Activated CD4-positive, alpha-beta T cell treated with anti-CD3 and anti-CD28 coated beads for 36 hours (primary cell): ENCODE measurements at regions of chr14 and their contacts with region 1.

Region 1: GRCh38 chr14:58297762-58298476 is 436 bp upstream of the ARID4A start:
- DNase-seq: peak; percentile 99
- ATAC-seq: peak; percentile 89
- H3K4me3 Mint-ChIP-seq: no peak overlapping the region
- H3K27ac Mint-ChIP-seq: no peak overlapping the region
- H3K4me1 Mint-ChIP-seq: peaks cover 38% of the 10 kb centered on the region
- H3K27me3 Mint-ChIP-seq: no peaks in the 10 kb centered on the region

Region 2: GRCh38 chr14:57390028-57390805 is 907.7 kb before region 1 on chr14 and contains the start of gene NAA30:
- CTCF ChIA-PET with region 1: no interaction called
- POLR2A ChIA-PET with region 1: no interaction called
- intact Hi-C with region 1: loop called in 1 of 2 experiments (anchors 2 kb)
- DNase-seq: peak; percentile 96
- ATAC-seq: peak; percentile 91
- H3K4me3 Mint-ChIP-seq: peak within 1 kb of the TSS; percentile 81
- H3K27ac Mint-ChIP-seq: peak within 1 kb of the TSS; percentile 93
- H3K4me1 Mint-ChIP-seq: peaks cover 37% of the 10 kb centered on the region
- H3K27me3 Mint-ChIP-seq: no peaks in the 10 kb centered on the region
- total RNA-seq, gene NAA30: 14.2 to 17.6 TPM

Region 3: DNA sequence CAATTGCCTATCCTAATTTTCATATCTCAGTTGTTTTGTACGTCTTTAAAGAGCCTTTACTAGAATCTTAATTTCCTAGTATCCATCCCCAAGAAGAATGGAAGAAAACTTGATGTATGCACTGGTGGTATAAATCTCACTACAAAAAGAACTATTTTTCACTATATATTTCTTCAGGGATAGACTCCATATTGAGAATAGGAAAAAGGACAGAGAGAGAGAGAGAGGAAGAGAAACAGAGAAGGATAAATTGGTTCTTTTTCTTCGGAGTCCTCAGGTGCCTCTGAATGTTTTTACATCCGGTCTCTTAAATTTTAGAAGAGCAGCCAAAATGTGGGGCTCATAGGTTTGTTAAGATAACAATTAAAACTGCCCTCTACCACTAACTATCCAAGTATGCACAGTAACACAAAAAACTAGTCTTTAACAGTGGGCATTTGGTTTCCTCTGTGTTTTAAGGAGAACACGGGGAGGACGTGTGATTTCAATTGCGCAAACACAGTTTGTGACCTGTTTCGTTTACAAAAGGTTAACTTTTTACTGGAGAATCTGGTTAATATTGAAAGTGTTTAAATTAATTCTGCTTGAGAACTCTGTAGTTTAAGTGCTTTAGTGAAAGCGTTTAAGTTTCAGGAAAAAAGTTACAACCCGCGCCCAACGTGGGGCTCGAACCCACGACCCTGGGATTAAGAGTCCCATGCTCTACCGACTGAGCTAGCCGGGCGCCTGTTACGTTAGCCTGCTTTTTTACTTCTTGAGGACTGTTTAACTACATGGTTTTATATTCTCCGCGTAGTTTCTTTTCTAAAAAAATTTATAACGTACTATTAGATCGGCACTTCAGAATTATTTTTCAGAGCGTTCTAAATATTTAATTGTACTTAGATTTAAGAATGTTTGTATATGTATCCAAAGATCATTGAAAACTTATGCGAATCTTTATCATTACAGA is 58.4 kb before region 1 on chr14:
- CTCF ChIA-PET with region 1: interaction called, 11 read pairs
- POLR2A ChIA-PET with region 1: interaction called, 15 read pairs
- intact Hi-C with region 1: loop called (anchors 1 kb)
- DNase-seq: peak; percentile 87
- ATAC-seq: peak; percentile 6
- H3K4me3 Mint-ChIP-seq: no peak overlapping the region
- H3K27ac Mint-ChIP-seq: no peak overlapping the region
- H3K4me1 Mint-ChIP-seq: peaks cover 21% of the 10 kb centered on the region
- H3K27me3 Mint-ChIP-seq: no peaks in the 10 kb centered on the region

Region 4: GRCh38 chr14:58272588-58273372 is 25.1 kb before region 1 on chr14:
- CTCF ChIA-PET with region 1: interaction called, 4 read pairs
- POLR2A ChIA-PET with region 1: interaction called, 11 read pairs
- intact Hi-C with region 1: no loop called
- DNase-seq: no peak
- ATAC-seq: no peak
- H3K4me3 Mint-ChIP-seq: no peak overlapping the region
- H3K27ac Mint-ChIP-seq: peak overlapping the region; percentile 13
- H3K4me1 Mint-ChIP-seq: peaks cover 50% of the 10 kb centered on the region
- H3K27me3 Mint-ChIP-seq: no peaks in the 10 kb centered on the region

Region 5: GRCh38 chr14:58331111-58331510 is 33.2 kb after region 1 on chr14:
- CTCF ChIA-PET with region 1: interaction called, 3 read pairs
- POLR2A ChIA-PET with region 1: interaction called, 3 read pairs
- intact Hi-C with region 1: loop called (anchors 1 kb)
- DNase-seq: peak; percentile 91
- ATAC-seq: peak; percentile 98
- H3K4me3 Mint-ChIP-seq: peak overlapping the region; percentile 71
- H3K27ac Mint-ChIP-seq: peak overlapping the region; percentile 87
- H3K4me1 Mint-ChIP-seq: peaks cover 16% of the 10 kb centered on the region
- H3K27me3 Mint-ChIP-seq: no peaks in the 10 kb centered on the region

Region 6: DNA sequence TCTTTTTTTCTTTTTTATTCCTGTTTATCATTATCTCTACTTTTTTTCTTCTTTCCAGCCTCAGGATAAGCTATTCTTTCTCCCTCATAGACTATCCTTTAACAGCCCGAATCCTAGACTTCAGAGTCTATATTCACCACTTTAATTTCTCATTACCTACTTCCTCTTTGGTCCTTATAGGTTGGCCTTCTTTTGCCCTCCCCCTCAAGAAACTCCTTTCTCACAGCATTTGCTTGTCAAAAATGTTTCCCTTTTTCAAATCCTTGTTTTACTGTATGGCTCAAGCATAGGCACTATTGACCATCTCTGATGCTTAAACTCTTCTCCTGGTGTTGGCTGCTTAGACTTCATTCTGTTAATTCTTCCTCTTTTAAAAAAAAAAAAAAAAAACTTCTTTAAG is 182.1 kb after region 1 on chr14:
- CTCF ChIA-PET with region 1: no interaction called
- POLR2A ChIA-PET with region 1: no interaction called
- intact Hi-C with region 1: no loop called
- DNase-seq: no peak
- ATAC-seq: no peak
- H3K4me3 Mint-ChIP-seq: no peak overlapping the region
- H3K27ac Mint-ChIP-seq: no peak overlapping the region
- H3K4me1 Mint-ChIP-seq: no peaks in the 10 kb centered on the region
- H3K27me3 Mint-ChIP-seq: no peaks in the 10 kb centered on the region